ENCODE measurements at regions of chr4 and their contacts with region 1.

Region 1: DNA sequence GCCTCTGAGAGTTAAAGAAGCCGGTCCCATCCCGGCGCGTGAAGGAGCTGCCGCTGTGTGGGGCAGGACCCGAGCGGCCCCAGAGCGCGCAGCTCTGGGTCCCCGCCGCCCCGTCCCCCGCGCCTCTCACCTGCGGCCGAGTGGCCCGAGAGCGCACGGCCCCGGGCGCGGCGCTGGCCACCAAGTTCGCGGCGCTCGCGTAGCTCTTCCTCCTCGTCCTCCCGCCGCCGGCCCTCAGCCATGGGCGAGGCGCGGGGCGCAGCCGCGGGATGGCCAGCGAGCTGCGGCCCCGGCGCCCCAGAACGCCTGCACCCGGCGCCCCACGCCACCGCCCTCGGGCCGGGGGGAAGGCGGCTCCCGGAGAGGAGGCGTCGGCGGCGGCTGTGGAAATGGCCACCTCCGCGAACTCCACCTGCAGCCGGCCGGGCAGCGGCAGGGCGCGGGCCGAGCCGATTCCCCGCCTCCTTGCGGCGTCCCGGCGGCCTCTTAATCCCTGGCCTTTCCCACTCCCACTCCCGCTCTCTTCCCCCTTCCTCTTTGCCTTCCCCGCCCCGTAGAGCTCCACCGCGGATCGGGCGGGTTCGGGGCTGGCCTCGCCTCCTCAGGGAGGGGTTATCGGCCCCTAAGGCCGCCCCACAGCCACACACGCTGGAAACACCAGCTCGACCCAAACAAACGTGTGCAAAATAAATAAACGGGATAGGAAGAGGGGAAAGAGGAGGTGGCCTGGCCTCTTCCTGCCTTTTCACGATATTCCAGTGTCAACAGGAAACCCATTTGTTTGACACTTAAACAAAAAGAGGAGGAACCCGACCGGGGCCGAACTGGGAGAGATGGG is at the start of gene SH3D19:
- DNase-seq: peak; percentile 79 to 88 (median 83)
- ATAC-seq: peak; percentile 88 to 96 (median 92)
- H3K4me3 ChIP-seq: peak within 1 kb of the TSS; percentile 68 to 93 (median 75)
- H3K27ac ChIP-seq: peak within 1 kb of the TSS; percentile 85 to 96 (median 94)
- H3K4me1 ChIP-seq: peaks cover 0 to 37% (median 21%) of the 10 kb centered on the region in 12 donors
- H3K27me3 ChIP-seq: peaks cover 0 to 18% (median 0%) of the 10 kb centered on the region in 9 donors
- CTCF ChIP-seq: peak in 3 of 12 donors; percentile 8 to 21 (median 16)
- POLR2A ChIP-seq: peak in 1 of 2 donors; percentile 63
- total RNA-seq, gene SH3D19: 91.1 to 173 (median 139) TPM

Region 2: DNA sequence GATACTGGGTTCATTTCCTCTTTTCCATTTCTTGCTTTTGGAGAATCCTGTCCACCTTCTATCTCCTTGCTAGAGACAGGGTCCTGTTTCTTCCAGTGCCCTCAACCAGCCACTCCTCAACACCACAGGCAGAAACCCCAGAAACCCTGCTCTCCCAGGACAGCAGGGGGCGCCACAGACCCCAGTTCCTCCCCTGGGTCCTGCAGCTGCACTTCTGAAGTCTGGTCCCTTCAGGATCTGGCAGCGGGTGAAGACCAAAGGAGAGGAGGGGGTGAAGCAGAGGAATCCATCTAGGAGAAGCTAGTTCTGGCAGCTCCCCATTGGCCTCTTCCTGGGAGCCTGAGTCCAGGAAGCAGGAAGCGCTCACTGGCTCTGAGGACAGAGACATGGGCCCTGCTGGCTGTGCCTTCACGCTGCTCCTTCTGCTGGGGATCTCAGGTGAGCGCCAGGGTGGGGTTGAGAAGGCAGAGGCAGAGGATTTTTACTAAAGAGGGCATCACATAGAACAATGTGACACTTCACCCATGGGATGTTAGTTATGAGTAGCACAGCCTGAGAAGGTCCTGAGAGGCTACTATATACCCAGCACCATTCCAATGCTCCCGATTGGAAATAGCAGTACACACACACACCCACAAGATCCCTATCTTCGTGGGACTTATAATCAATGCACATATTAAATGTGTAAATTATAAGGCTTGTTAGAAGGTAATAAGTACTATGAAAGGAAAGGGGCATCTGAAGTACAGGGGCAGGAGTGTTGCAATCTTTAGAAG is 48.4 kb before region 1 on chr4 and contains the start of gene PRSS48:
- intact Hi-C with region 1: loop called in 6 of 10 experiments (anchors 5 to 10 kb)
- DNase-seq: peak; percentile 54 to 75 (median 59)
- ATAC-seq: peak; percentile 47 to 81 (median 78)
- H3K4me3 ChIP-seq: no peak within 1 kb of the TSS
- H3K27ac ChIP-seq: no peak within 1 kb of the TSS
- H3K4me1 ChIP-seq: peaks cover 0 to 60% (median 11%) of the 10 kb centered on the region in 12 donors
- H3K27me3 ChIP-seq: no peaks in the 10 kb centered on the region
- CTCF ChIP-seq: peak; percentile 60 to 80 (median 70)
- POLR2A ChIP-seq: no peak
- total RNA-seq, gene PRSS48: not detected

Region 3: DNA sequence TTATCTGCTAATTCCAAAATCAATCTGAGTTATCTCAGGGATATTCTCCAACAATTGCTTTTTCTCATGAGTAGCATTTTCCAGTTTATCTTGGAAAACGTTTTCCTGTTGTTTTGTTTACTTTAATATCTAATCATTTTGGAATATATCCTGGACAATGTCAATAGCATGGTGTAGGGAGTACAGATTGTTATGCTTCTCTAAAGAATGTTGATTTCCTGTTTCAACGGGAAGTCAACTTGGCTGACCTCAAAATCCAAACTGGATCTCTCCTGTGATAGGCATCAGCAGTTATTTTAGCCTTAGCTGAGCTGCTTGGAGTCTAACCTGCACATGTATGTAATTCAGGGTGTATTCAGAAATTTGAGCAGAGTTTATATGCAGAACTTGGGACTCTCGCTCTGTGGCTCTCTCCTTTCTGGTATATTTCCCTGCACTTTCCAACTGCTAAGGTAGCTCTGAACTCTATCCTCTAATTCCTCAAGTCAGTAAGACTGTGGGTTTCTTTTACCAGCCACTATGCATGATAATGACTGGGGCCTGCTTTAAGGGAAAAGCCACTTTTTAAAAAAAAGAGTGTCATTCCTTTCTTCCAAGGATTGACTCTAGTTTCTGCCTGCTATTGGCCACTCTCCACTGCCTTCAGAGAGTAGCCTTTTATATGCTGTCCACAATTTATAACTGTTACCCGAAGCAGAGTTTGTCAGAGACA is 40.6 kb before region 1 on chr4:
- intact Hi-C with region 1: loop called in 6 of 10 experiments (anchors 5 to 10 kb)
- DNase-seq: no peak
- ATAC-seq: peak in 3 of 4 donors; percentile 51 to 63 (median 62)
- H3K4me3 ChIP-seq: no peak overlapping the region
- H3K27ac ChIP-seq: peak overlapping the region in 8 of 12 donors; percentile 28 to 61 (median 39)
- H3K4me1 ChIP-seq: peaks cover 0 to 60% (median 10%) of the 10 kb centered on the region in 12 donors
- H3K27me3 ChIP-seq: no peaks in the 10 kb centered on the region
- CTCF ChIP-seq: no peak
- POLR2A ChIP-seq: no peak